Activated CD4-positive, alpha-beta T cell treated with anti-CD3 and anti-CD28 coated beads for 36 hours (primary cell): ENCODE measurements at regions of chr3 and their contacts with region 1.

Region 1: DNA sequence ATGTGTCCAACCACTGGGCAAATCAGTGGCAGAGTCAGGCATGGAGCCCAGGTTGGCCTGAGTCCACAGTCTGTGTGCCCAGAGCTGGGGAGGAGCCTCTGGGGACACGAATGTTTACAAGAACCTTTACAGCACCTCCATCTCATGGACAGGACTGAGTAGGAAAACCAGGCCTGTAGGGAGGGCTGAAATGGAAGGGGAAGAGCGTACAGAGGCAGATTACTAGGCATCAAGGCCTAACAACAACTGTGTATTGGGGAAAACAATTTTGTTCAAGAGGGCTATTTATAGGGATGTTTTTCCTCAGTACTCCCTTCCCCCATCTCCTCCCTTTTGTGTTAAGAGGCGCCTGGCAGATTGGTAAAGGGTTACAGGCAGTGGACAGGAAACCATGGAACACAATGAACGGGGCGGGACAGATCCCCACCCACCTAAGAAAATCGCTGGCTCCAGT is 15.1 kb upstream of the ARHGAP31 start:
- DNase-seq: no peak
- ATAC-seq: no peak
- H3K4me3 Mint-ChIP-seq: no peak overlapping the region
- H3K27ac Mint-ChIP-seq: no peak overlapping the region
- H3K4me1 Mint-ChIP-seq: peaks cover 14% of the 10 kb centered on the region
- H3K27me3 Mint-ChIP-seq: no peaks in the 10 kb centered on the region

Region 2: DNA sequence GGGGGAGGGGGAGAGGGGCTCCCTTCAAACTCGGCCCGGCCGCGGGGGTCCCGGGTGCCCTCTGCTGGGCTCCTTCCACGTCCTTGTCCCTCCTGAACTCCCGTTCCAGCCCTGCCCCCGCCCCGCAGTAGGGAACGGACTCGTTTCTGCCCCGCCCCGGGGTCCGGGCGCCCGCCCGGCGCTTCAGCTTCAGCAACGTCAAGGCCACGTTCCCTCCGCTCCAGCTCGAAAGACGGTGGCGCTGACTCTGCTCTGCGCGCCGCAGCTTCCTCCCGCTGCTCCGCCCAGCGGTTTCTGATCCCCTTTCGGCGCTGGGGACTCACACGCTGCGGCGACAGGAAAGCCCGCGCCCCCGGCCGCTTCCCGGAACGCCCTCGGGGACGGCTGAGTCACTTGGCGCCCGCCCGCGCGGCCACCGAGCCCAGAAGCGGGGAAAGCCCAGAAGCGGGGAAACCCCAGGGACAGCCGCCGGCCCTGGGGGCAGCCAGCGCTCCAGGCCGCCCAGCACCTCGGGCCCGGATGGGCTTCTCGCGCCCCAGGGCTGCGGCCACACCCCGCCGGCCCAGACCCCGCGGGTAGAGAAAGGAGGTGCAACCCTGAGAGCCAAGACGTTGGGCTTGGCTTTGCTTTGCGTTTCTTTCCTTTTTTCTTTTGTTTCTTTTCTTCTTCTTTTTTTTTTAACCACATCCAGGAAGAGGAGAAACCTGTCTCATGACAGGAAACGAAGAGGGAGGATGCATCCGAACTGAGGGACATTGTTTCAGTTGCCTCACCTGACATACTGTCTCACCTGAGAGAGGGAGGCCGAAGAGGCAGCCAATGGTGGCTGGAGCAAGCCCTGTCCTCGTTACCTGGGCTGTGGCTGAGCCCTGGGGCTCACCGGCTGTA is 44.0 kb after region 1 on chr3:
- CTCF ChIA-PET with region 1: no interaction called
- POLR2A ChIA-PET with region 1: no interaction called
- intact Hi-C with region 1: loop called in 1 of 2 experiments (anchors 1 kb)
- DNase-seq: peak; percentile 97
- ATAC-seq: peak; percentile 92
- H3K4me3 Mint-ChIP-seq: peak overlapping the region; percentile 83
- H3K27ac Mint-ChIP-seq: peak overlapping the region; percentile 87
- H3K4me1 Mint-ChIP-seq: peaks cover 46% of the 10 kb centered on the region
- H3K27me3 Mint-ChIP-seq: no peaks in the 10 kb centered on the region

Region 3: DNA sequence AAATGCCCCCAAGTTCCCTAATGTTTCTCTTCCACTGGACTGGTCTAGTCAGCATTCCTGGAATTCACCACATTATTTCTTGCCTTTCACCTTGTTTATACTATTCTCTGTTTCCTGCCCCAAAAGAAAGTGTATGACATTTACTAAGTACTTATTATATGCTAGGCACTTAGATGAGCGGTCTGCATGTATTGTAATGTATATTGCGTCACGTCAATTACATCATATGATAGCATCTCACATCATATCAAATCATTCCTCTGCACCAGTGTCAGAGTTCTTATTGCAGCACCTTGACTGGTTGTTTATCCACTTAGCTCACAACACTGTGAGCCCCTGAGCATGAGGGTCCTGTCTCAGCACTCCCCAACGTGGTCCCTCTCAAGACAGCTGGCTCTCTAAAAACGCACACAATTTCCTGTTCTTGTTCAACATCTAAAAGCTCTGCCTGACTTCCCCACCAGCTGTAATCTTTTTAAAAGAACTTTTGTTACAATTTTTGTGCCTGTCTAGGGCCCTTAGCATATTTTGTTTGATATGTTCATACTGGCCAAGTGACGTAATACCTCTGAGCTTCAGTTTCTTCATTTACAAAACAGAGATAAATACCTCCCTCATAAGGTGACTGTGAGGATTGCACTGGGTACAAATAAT is 73.8 kb after region 1 on chr3:
- CTCF ChIA-PET with region 1: interaction called, 21 read pairs
- POLR2A ChIA-PET with region 1: no interaction called
- intact Hi-C with region 1: loop called (anchors 1 kb)
- DNase-seq: no peak
- ATAC-seq: peak; percentile 63
- H3K4me3 Mint-ChIP-seq: no peak overlapping the region
- H3K27ac Mint-ChIP-seq: peak overlapping the region; percentile 32
- H3K4me1 Mint-ChIP-seq: peaks cover 34% of the 10 kb centered on the region
- H3K27me3 Mint-ChIP-seq: no peaks in the 10 kb centered on the region

Region 4: GRCh38 chr3:119559441-119559963 is 280.4 kb after region 1 on chr3 and contains the start of gene CD80:
- CTCF ChIA-PET with region 1: no interaction called
- POLR2A ChIA-PET with region 1: no interaction called
- intact Hi-C with region 1: loop called in 1 of 2 experiments (anchors 2 kb)
- DNase-seq: peak; percentile 81
- ATAC-seq: peak; percentile 88
- H3K4me3 Mint-ChIP-seq: no peak within 1 kb of the TSS
- H3K27ac Mint-ChIP-seq: peak within 1 kb of the TSS; percentile 15
- H3K4me1 Mint-ChIP-seq: peaks cover 13% of the 10 kb centered on the region
- H3K27me3 Mint-ChIP-seq: no peaks in the 10 kb centered on the region
- total RNA-seq, gene CD80: 0.74 to 1.2 TPM